ENCODE measurements at regions of chr9 and their contacts with region 1.

Region 1: DNA sequence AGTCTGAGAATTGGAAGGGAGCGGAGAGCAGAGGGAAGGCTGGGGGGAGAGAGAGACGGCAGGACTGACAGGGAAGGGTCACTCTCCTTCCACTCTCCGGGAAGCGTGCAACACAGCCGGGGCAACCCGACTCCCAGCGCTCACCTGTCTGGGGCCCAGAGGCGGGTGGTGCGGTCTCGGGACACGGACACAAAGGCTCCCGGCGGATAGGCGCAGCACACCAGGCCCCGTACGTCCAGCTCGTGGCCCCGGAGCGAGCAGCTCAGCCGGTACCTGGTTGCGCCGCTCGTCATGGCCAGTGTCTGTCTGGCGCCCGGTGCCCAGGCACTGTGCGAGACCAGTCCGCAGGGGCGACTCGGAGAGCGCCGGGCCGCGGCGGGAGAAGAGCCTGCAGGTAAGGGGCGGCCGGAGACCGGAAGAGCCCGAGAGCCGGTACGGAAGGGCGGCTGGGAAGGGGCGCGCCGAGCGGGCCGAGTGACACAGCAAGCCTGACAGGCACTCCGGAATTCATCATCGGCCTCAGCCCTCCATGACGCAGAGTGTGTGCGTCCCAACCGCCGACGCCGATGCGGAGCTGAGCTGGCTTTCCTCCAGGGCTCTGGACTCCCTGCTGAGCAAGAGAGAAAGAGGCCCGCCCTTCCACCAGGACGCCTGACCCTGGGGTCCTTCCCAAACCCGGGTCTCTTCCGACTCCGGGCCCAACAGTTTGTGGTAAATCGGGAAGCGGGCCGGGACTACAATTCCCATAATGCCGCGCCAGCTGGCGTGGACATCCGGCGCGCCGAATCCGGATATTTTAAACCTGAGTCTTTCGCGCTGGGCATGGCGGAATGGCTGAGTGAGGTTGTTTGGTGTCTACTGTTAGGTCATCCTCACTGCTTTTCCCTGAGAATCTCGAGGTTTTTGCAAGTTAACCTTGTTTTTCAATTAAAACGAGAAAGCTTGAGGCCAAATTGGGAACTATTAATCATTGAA is at the start of gene PLAA:
- DNase-seq: peak; percentile 93
- H3K4me3 ChIP-seq: peak within 1 kb of the TSS; percentile 84 to 98 (median 93)
- H3K27ac ChIP-seq: peak within 1 kb of the TSS; percentile 96
- H3K4me1 ChIP-seq: peaks cover 21% of the 10 kb centered on the region
- H3K27me3 ChIP-seq: no peaks in the 10 kb centered on the region
- CTCF ChIP-seq: peak in 1 of 2 donors; percentile 33
- total RNA-seq, gene PLAA: 34.1 to 39.7 TPM

Region 2: GRCh38 chr9:26892251-26893029 is 54.6 kb before region 1 on chr9 and contains the start of gene CAAP1:
- CTCF ChIA-PET with region 1: interaction called, 3 read pairs
- dilution Hi-C with region 1: no loop called
- in situ Hi-C with region 1: no loop called
- intact Hi-C with region 1: loop called (anchors 1 kb)
- DNase-seq: peak; percentile 85
- H3K4me3 ChIP-seq: peak within 1 kb of the TSS; percentile 94 to 99 (median 98)
- H3K27ac ChIP-seq: peak within 1 kb of the TSS; percentile 86
- H3K4me1 ChIP-seq: peaks cover 7% of the 10 kb centered on the region
- H3K27me3 ChIP-seq: no peaks in the 10 kb centered on the region
- CTCF ChIP-seq: peak; percentile 21 to 59
- total RNA-seq, gene CAAP1: 17.1 to 19.2 TPM